Calu3 (cell line): ENCODE measurements at regions of chrX and their contacts with region 1.

Region 1: GRCh38 chrX:106730401-106730800 is 3.9 kb downstream of the RNF128 start:
- DNase-seq: no peak
- H3K4me3 Mint-ChIP-seq: peak overlapping the region; percentile 91
- H3K27ac Mint-ChIP-seq: peak overlapping the region; percentile 35
- H3K4me1 Mint-ChIP-seq: peaks cover 15% of the 10 kb centered on the region
- H3K27me3 Mint-ChIP-seq: no peaks in the 10 kb centered on the region
- CTCF ChIP-seq: no peak

Region 2: GRCh38 chrX:106611679-106612392 is 118.6 kb before region 1 on chrX and contains the start of gene RADX:
- CTCF ChIA-PET with region 1: no interaction called
- intact Hi-C with region 1: loop called (anchors 5 kb)
- DNase-seq: peak; percentile 74
- H3K4me3 Mint-ChIP-seq: peak within 1 kb of the TSS; percentile 69
- H3K27ac Mint-ChIP-seq: peak within 1 kb of the TSS; percentile 71
- H3K4me1 Mint-ChIP-seq: peaks cover 15% of the 10 kb centered on the region
- H3K27me3 Mint-ChIP-seq: no peaks in the 10 kb centered on the region
- CTCF ChIP-seq: no peak
- total RNA-seq, gene RADX: 3.4 and 4.3 TPM in 2 replicates

Region 3: DNA sequence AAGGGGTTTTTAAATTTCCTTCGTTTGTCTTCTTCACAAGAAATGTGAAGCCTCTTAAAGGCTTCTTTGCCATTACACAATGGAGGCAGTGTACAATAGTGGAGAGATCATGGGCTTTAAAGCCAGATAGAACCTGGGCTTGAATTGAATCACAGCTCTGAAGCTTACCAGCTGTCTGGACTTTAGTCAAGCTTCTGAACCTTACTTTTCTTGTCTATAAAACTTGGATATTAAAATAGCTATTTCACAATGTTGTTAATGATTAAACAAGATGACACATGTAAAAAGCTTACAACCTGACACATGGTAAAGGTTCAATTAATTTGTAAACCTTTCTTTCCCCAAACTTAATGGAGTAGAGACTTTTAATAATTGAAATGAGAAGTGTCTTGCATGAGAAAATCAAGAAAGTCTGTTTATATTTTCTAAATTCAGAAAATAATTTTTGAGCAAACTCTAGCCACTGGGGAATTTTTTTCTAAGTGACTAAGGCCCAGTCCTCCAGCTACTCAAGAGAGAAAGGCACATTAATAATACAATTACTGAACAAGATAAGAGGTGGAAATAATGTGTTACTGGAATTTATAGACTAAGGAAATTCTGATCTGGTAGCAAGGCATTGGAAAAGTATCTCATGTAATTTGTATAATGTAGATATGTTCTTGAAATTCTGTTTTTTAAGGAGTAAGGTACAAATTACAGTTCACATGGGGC is 50.4 kb after region 1 on chrX:
- CTCF ChIA-PET with region 1: interaction called, 5 read pairs
- intact Hi-C with region 1: loop called (anchors 2 kb)
- DNase-seq: peak; percentile 15
- H3K4me3 Mint-ChIP-seq: peak overlapping the region; percentile 40
- H3K27ac Mint-ChIP-seq: peak overlapping the region; percentile 70
- H3K4me1 Mint-ChIP-seq: peaks cover 34% of the 10 kb centered on the region
- H3K27me3 Mint-ChIP-seq: no peaks in the 10 kb centered on the region
- CTCF ChIP-seq: no peak